ENCODE measurements at regions of chr19 and their contacts with region 1.

Region 1: GRCh38 chr19:12766051-12766521 is 9.3 kb downstream of the HOOK2 start:
- DNase-seq: peak; percentile 63 to 83 (median 69)
- H3K4me3 ChIP-seq: no peak overlapping the region
- H3K4me3 Mint-ChIP-seq: peak overlapping the region in 1 of 8 donors; percentile 48
- H3K27ac ChIP-seq: no peak overlapping the region
- H3K27ac Mint-ChIP-seq: peak overlapping the region in 1 of 7 donors; percentile 42
- H3K4me1 ChIP-seq: no peaks in the 10 kb centered on the region
- H3K4me1 Mint-ChIP-seq: peaks cover 2 to 14% (median 6%) of the 10 kb centered on the region in 4 donors
- H3K27me3 ChIP-seq: no peaks in the 10 kb centered on the region
- H3K27me3 Mint-ChIP-seq: no peaks in the 10 kb centered on the region

Region 2: DNA sequence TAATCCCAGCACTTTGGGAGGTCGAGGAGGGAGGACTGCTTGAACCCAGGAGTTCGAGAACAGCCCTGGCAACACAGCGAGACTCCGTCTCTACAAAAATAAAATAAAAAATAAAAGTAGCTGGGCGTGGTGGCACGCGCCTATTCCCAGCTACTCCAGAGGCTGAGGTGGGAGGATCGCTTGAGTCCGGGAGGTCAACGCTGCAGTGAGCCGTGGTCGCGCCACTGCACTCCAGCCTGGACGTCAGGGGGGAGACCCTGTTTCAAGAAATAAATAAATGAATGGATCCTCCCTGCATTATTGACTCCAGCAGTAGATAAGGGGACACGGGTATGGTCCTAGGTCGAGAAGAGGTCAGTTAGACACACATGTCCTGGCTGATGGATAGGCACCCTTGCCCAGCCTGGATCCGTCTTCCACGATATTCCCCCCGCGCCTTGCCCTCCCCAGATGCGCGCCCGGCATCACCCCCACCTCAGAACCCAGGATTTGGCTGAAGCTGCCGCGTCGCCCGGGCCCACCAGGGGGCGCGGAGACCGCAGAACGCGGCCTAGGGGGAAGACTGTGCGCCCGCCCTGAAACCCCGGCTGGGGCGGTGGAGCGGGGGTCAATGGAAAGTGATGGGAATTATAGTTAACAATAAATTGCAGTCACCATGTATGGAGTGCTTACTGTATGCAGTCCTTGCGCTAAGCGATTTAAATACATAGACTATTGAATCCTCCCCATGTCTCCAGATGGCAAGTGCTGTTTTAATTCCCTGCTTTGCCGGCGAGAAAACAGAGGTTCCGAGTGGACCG is 11.3 kb after region 1 on chr19:
- CTCF ChIA-PET with region 1: interaction called, 44 read pairs
- POLR2A ChIA-PET with region 1: interaction called, 11 read pairs
- intact Hi-C with region 1: loop called (anchors 1 kb)
- DNase-seq: peak; percentile 77 to 83 (median 80)
- H3K4me3 ChIP-seq: peak overlapping the region; percentile 69 to 76
- H3K4me3 Mint-ChIP-seq: peak overlapping the region; percentile 85 to 92 (median 87)
- H3K27ac ChIP-seq: peak overlapping the region; percentile 86
- H3K27ac Mint-ChIP-seq: peak overlapping the region; percentile 92 to 97 (median 94)
- H3K4me1 ChIP-seq: peaks cover 42% of the 10 kb centered on the region
- H3K4me1 Mint-ChIP-seq: peaks cover 25 to 52% (median 35%) of the 10 kb centered on the region in 4 donors
- H3K27me3 ChIP-seq: no peaks in the 10 kb centered on the region
- H3K27me3 Mint-ChIP-seq: no peaks in the 10 kb centered on the region

Region 3: DNA sequence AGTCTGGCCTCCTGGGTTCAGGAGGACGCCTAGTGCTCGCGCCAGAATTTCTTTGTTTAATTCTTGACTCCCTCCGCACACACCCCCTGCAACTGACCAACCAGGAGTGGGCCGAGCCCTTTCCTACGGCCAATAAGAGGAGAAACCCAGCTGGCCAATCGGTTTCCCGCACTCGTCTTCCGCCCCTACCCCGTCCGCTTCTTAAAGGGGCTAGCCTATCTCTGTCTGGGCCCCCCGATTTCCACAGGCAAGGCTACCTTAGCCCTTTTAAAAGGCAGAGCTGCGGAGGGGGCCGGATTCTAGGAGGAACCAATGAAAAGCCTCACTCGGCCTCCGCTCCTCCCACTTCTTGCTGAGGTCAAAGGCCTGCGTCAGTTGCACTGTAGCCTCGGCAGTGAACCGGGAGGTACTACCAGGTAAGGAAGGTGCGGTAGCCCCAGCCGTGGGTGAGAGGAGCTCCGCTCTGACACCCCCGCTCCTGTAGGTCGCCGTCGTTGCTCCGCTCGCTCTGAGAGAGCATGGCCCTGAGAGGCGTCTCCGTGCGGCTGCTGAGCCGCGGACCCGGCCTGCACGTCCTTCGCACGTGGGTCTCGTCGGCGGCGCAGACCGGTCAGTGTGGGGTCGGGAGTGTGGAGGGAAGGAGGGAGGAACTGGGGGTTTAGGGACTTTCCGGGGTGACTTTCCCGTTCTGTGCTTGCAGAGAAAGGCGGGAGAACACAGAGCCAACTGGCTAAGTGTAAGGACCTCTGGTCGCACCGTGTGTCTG is 124.9 kb after region 1 on chr19 and contains the start of gene GCDH:
- CTCF ChIA-PET with region 1: no interaction called
- POLR2A ChIA-PET with region 1: no interaction called
- intact Hi-C with region 1: no loop called
- DNase-seq: peak; percentile 96 to 99 (median 97)
- H3K4me3 ChIP-seq: peak within 1 kb of the TSS; percentile 84 to 88
- H3K4me3 Mint-ChIP-seq: peak within 1 kb of the TSS; percentile 97 to 99 (median 99)
- H3K27ac ChIP-seq: peak within 1 kb of the TSS; percentile 69
- H3K27ac Mint-ChIP-seq: peak within 1 kb of the TSS; percentile 93 to 99 (median 97)
- H3K4me1 ChIP-seq: peaks cover 22% of the 10 kb centered on the region
- H3K4me1 Mint-ChIP-seq: peaks cover 14 to 37% (median 25%) of the 10 kb centered on the region in 4 donors
- H3K27me3 ChIP-seq: no peaks in the 10 kb centered on the region
- H3K27me3 Mint-ChIP-seq: no peaks in the 10 kb centered on the region
- total RNA-seq, gene GCDH: 63.9 to 66.1 TPM

Region 4: DNA sequence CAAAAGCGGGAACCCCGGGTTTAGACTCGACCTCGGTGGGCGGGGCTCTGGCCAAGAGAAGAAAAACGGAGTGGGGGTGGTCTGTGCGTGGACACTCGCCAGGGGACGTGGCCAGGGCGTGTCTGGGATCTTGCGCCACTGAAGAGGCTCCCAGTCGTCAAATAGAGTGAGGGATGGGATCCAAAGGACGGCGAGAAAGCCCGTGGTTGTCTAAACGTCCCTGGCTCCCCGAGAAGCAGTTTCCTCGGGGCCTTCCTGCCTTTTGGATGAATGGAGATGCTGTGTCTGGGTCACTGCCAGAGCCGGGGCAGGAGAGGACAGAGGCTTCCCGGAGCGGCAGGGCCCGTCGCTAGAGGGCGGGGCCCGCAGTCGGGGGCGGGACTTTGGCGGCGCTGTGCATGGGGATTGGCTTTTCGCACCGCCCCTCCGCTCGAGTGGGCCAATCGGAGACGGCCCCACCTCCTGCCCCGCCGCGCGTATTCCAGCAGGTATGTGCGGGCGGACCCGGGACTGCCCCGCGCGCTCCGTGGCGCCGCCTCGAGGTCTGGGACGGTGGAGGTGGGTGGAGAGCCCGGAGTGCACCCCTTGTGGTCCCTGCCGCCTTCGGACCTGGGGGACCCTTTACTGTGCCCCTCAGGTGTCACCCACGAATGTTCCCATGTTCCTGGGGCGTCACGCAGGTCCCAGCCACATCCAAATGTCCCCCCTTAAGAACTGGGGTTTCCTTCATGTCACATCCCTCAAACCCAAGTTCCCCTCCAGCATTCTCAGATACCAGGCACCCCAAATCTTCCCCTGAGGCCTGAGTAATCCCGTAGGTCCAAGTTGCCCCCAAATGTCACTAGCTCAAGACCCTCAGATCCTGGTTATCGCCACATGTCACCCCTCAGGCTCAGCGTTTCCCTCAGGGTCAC is 1067.5 kb after region 1 on chr19:
- CTCF ChIA-PET with region 1: no interaction called
- POLR2A ChIA-PET with region 1: no interaction called
- intact Hi-C with region 1: no loop called
- DNase-seq: peak; percentile 90 to 94 (median 91)
- H3K4me3 ChIP-seq: peak overlapping the region; percentile 36 to 47
- H3K4me3 Mint-ChIP-seq: peak overlapping the region; percentile 83 to 88 (median 86)
- H3K27ac ChIP-seq: peak overlapping the region; percentile 92
- H3K27ac Mint-ChIP-seq: peak overlapping the region; percentile 96 to 100 (median 97)
- H3K4me1 ChIP-seq: peaks cover 49% of the 10 kb centered on the region
- H3K4me1 Mint-ChIP-seq: peaks cover 17 to 50% (median 30%) of the 10 kb centered on the region in 4 donors
- H3K27me3 ChIP-seq: no peaks in the 10 kb centered on the region
- H3K27me3 Mint-ChIP-seq: no peaks in the 10 kb centered on the region